ENCODE measurements at regions of chr12 and their contacts with region 1.

Region 1: GRCh38 chr12:123150744-123151456 is at the start of gene PITPNM2:
- DNase-seq: peak; percentile 58 to 90 (median 87)
- ATAC-seq: peak; percentile 70 to 89
- H3K4me3 ChIP-seq: peak within 1 kb of the TSS; percentile 70
- H3K27ac ChIP-seq: peak within 1 kb of the TSS; percentile 7
- H3K4me1 ChIP-seq: peaks cover 4% of the 10 kb centered on the region
- H3K27me3 ChIP-seq: no peaks in the 10 kb centered on the region
- total RNA-seq, gene PITPNM2: 19.4 to 26.8 (median 20.9) TPM

Region 2: DNA sequence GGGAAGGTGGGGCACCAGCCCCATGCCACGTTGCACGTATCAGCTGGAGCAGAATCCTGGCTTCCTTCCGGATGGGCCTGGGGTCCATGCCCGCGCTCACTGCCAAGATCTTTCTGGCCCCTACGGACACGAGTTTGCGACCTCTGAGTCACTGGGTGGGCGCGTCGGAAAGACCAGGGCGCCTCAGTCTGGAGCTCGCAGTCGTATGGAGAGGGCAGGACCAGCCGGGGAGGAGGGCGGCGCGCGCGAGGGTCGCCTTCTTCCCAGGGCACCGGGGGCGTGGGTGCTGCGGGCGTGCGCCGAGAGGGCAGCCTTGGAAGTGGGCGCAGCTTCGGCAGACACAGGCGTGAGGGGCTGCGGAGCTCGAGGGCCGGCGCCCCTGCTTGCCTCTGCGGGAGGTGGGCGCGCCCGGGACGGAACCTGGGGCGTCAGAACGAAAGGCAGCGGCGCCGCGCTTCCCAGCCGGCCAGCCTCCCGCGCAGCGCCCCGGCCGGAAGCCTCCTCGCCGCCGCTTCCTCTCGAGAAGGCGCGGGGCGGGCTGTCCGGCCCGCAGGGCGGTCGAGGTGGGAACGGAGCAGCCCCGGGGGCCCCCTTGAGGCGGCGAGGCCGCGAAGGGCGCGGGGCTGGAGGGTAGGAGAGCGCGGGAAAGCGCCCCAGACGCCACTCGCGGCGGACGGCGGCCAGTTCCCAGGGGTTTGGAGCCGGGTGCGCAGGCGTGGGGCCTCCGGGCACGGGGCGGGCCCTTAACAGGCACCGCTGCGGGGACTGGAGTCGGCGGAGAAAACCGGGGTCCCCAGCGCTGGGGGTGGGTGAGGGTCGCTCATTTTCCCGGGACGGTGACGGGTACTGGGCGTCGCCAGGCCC is 170.5 kb before region 1 on chr12 and contains the start of gene ARL6IP4:
- intact Hi-C with region 1: loop called in 1 of 4 experiments (anchors 5 kb)
- DNase-seq: peak; percentile 67 to 88 (median 87)
- ATAC-seq: peak; percentile 74 to 76
- H3K4me3 ChIP-seq: peak within 1 kb of the TSS; percentile 75
- H3K27ac ChIP-seq: peak within 1 kb of the TSS; percentile 43
- H3K4me1 ChIP-seq: peaks cover 6% of the 10 kb centered on the region
- H3K27me3 ChIP-seq: no peaks in the 10 kb centered on the region
- total RNA-seq, gene ARL6IP4: 158 to 185 (median 168) TPM

Region 3: DNA sequence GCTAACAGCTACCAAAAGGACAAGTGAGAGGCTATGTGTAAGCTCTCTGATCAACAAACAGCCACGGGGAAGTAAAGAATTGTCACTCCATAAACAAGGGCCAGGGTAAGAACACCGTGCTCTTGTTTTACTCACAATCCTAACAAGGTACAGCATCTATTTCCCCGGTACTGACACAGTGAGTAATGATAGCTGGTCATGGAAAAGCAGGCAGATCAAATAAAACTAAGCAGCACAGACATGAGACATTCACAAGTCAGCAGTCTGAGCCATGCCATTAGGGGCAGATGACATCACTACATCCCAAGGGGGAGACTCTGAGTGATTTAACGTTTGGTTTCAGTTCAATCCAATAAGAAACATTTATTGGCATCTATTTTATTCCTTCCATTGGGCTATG is 116.0 kb before region 1 on chr12:
- intact Hi-C with region 1: loop called in 2 of 4 experiments (anchors 5 to 10 kb)
- DNase-seq: peak in 1 of 3 donors; percentile 9
- ATAC-seq: peak in 1 of 2 donors; percentile 44
- H3K4me3 ChIP-seq: no peak overlapping the region
- H3K27ac ChIP-seq: no peak overlapping the region
- H3K4me1 ChIP-seq: peaks cover 4% of the 10 kb centered on the region
- H3K27me3 ChIP-seq: no peaks in the 10 kb centered on the region

Region 4: DNA sequence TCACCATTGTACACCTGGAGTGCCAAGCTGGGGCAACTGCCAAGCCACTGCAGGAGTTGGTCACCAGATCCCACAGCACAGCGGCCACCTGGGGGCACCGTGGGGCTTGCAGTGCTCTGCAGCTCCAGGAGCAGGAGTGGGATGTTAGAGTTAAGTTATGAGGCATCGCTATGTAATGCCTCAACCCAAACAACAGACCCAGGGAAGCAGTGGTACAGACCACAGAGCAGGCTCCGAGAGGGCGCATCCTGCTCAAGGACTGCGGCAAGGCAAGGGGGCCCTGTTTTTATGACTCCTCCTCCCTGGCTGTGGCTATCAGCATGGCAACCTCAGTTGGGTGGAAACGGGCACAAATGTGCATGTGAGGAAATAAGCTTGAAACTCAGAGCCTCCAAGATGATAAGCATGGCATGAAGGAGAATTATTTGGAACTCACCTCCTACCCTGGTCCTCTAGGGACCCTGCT is 107.3 kb before region 1 on chr12:
- intact Hi-C with region 1: loop called (anchors 2 to 10 kb)
- DNase-seq: peak; percentile 79 to 94 (median 94)
- ATAC-seq: peak; percentile 87 to 90
- H3K4me3 ChIP-seq: no peak overlapping the region
- H3K27ac ChIP-seq: no peak overlapping the region
- H3K4me1 ChIP-seq: peaks cover 13% of the 10 kb centered on the region
- H3K27me3 ChIP-seq: no peaks in the 10 kb centered on the region

Region 5: GRCh38 chr12:123106628-123107359 is 44.1 kb before region 1 on chr12:
- intact Hi-C with region 1: no loop called
- DNase-seq: peak; percentile 68 to 83 (median 78)
- ATAC-seq: peak; percentile 43 to 85
- H3K4me3 ChIP-seq: no peak overlapping the region
- H3K27ac ChIP-seq: peak overlapping the region; percentile 70
- H3K4me1 ChIP-seq: peaks cover 34% of the 10 kb centered on the region
- H3K27me3 ChIP-seq: no peaks in the 10 kb centered on the region

Measured in right cardiac atrium (tissue), 5 donors.